ENCODE measurements at regions of chr2 and their contacts with region 1.

Region 1: GRCh38 chr2:100610381-100610831 is 47.6 kb downstream of the PDCL3 start:
- DNase-seq: peak; percentile 68 to 79 (median 72)
- H3K4me3 ChIP-seq: no peak overlapping the region
- H3K4me3 Mint-ChIP-seq: no peak overlapping the region
- H3K27ac ChIP-seq: no peak overlapping the region
- H3K27ac Mint-ChIP-seq: no peak overlapping the region
- H3K4me1 ChIP-seq: no peaks in the 10 kb centered on the region
- H3K4me1 Mint-ChIP-seq: peaks cover 2 to 6% (median 5%) of the 10 kb centered on the region in 4 donors
- H3K27me3 ChIP-seq: no peaks in the 10 kb centered on the region
- H3K27me3 Mint-ChIP-seq: no peaks in the 10 kb centered on the region

Region 2: GRCh38 chr2:100381240-100381639 is 229.2 kb before region 1 on chr2:
- CTCF ChIA-PET with region 1: no interaction called
- POLR2A ChIA-PET with region 1: no interaction called
- intact Hi-C with region 1: no loop called
- DNase-seq: peak in 4 of 5 donors; percentile 38 to 57 (median 54)
- H3K4me3 ChIP-seq: no peak overlapping the region
- H3K4me3 Mint-ChIP-seq: no peak overlapping the region
- H3K27ac ChIP-seq: no peak overlapping the region
- H3K27ac Mint-ChIP-seq: no peak overlapping the region
- H3K4me1 ChIP-seq: no peaks in the 10 kb centered on the region
- H3K4me1 Mint-ChIP-seq: peaks cover 0 to 1% (median 0%) of the 10 kb centered on the region in 4 donors
- H3K27me3 ChIP-seq: no peaks in the 10 kb centered on the region
- H3K27me3 Mint-ChIP-seq: peaks cover 2 to 11% of the 10 kb centered on the region in 2 donors

Region 3: DNA sequence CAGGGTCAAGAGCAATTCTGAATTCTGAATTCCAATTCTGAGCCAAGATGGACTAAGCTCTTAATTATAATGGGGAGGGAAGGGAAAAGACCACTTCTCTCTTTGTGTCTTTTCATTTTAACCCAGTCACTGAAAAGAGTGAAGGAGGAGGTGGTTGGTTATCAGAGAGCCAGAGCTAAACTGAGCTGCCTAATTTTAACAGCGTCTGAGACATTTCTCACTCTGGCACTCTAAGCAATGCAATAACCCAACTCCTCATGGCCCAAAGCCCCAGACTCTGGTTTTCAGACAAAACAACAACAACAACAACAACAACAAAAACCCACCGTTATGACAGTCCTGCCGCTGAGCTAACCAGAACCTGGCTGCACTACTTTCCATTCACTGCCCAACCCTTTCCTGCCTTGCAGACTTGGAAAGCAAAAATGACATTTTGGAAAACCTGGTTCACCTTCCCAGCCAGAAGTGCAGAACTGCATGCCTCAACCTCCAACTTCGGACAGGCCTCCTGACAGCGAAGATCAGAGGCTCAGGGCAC is 193.9 kb before region 1 on chr2:
- CTCF ChIA-PET with region 1: no interaction called
- POLR2A ChIA-PET with region 1: no interaction called
- intact Hi-C with region 1: no loop called
- DNase-seq: no peak
- H3K4me3 ChIP-seq: peak overlapping the region; percentile 32
- H3K4me3 Mint-ChIP-seq: peak overlapping the region; percentile 67 to 94 (median 84)
- H3K27ac ChIP-seq: no peak overlapping the region
- H3K27ac Mint-ChIP-seq: peak overlapping the region in 3 of 7 donors; percentile 25 to 30 (median 25)
- H3K4me1 ChIP-seq: peaks cover 8% of the 10 kb centered on the region
- H3K4me1 Mint-ChIP-seq: peaks cover 8 to 17% (median 14%) of the 10 kb centered on the region in 4 donors
- H3K27me3 ChIP-seq: no peaks in the 10 kb centered on the region
- H3K27me3 Mint-ChIP-seq: no peaks in the 10 kb centered on the region

Region 4: DNA sequence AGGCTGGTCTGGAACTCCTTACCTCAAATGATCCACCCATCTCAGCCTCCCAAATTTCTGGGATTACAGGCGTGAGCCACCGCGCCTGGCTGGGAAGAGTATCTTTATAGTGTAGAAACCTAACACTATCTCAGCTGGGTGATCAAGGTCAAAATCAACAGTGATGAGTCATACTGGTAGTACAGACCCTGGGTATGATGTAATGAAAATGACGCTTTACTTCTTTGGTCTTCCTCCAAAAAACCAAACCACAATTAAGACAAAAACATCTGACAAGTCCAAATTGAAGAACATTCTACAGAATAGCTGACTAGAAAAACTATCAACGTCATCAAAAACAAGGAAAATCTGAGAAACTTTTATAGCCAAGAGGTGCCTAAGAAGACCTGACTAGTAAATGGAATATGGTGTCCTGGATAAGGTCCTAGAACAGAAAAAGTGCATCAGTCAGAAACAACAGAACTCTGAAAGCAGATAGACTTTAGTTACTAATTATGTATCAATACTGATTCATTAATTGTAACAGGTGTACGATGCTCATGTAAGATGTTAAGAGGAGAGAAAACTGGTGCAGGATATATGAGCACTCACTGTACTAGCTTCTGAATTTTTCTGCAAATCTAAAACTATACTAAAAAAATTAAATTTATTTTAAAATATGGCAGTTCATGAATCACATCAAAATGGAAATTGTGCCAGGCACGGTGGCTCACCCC is 22.2 kb before region 1 on chr2:
- CTCF ChIA-PET with region 1: interaction called, 60 read pairs
- POLR2A ChIA-PET with region 1: no interaction called
- intact Hi-C with region 1: no loop called
- DNase-seq: peak; percentile 66 to 81 (median 73)
- H3K4me3 ChIP-seq: no peak overlapping the region
- H3K4me3 Mint-ChIP-seq: peak overlapping the region in 1 of 8 donors; percentile 6
- H3K27ac ChIP-seq: no peak overlapping the region
- H3K27ac Mint-ChIP-seq: peak overlapping the region; percentile 30 to 89 (median 70)
- H3K4me1 ChIP-seq: peaks cover 24% of the 10 kb centered on the region
- H3K4me1 Mint-ChIP-seq: peaks cover 16 to 47% (median 30%) of the 10 kb centered on the region in 4 donors
- H3K27me3 ChIP-seq: no peaks in the 10 kb centered on the region
- H3K27me3 Mint-ChIP-seq: no peaks in the 10 kb centered on the region

Region 5: DNA sequence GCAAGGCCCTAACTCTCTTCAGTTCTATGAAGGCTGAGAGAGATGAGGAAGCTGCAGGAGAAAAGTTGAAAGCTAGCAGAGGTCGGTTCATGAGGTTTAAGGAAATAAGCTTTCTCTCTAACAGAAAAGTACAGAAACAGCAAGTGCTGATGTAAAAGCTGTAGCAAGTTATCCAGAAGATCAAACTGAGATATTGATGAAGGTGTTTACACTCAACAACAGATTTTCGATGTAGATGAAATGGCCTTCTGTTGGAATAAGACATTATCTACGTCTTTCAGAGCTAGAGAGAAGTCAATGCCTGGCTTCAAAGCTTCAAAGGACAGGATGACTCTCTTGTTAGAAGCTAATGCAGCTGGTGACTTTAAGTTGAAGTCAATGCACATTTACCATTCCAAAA is 39.7 kb after region 1 on chr2:
- CTCF ChIA-PET with region 1: interaction called, 19 read pairs
- POLR2A ChIA-PET with region 1: interaction called, 4 read pairs
- intact Hi-C with region 1: no loop called
- DNase-seq: peak in 3 of 5 donors; percentile 11 to 24 (median 23)
- H3K4me3 ChIP-seq: no peak overlapping the region
- H3K4me3 Mint-ChIP-seq: peak overlapping the region in 7 of 8 donors; percentile 26 to 85 (median 53)
- H3K27ac ChIP-seq: no peak overlapping the region
- H3K27ac Mint-ChIP-seq: peak overlapping the region in 4 of 7 donors; percentile 29 to 90 (median 49)
- H3K4me1 ChIP-seq: peaks cover 33% of the 10 kb centered on the region
- H3K4me1 Mint-ChIP-seq: peaks cover 18 to 41% (median 30%) of the 10 kb centered on the region in 4 donors
- H3K27me3 ChIP-seq: no peaks in the 10 kb centered on the region
- H3K27me3 Mint-ChIP-seq: no peaks in the 10 kb centered on the region

Region 6: GRCh38 chr2:100819764-100820421 is 209.5 kb after region 1 on chr2 and contains the start of gene NPAS2:
- CTCF ChIA-PET with region 1: interaction called, 3 read pairs
- POLR2A ChIA-PET with region 1: no interaction called
- intact Hi-C with region 1: loop called (anchors 1 kb)
- DNase-seq: no peak
- H3K4me3 ChIP-seq: peak within 1 kb of the TSS in 1 of 2 donors; percentile 32
- H3K4me3 Mint-ChIP-seq: peak within 1 kb of the TSS; percentile 60 to 78 (median 72)
- H3K27ac ChIP-seq: no peak within 1 kb of the TSS
- H3K27ac Mint-ChIP-seq: no peak within 1 kb of the TSS
- H3K4me1 ChIP-seq: peaks cover 12% of the 10 kb centered on the region
- H3K4me1 Mint-ChIP-seq: peaks cover 4 to 19% (median 12%) of the 10 kb centered on the region in 4 donors
- H3K27me3 ChIP-seq: peaks cover 14% of the 10 kb centered on the region
- H3K27me3 Mint-ChIP-seq: peaks cover 31 to 32% of the 10 kb centered on the region in 2 donors
- total RNA-seq, gene NPAS2: 2.1 to 2.6 TPM

Region 7: DNA sequence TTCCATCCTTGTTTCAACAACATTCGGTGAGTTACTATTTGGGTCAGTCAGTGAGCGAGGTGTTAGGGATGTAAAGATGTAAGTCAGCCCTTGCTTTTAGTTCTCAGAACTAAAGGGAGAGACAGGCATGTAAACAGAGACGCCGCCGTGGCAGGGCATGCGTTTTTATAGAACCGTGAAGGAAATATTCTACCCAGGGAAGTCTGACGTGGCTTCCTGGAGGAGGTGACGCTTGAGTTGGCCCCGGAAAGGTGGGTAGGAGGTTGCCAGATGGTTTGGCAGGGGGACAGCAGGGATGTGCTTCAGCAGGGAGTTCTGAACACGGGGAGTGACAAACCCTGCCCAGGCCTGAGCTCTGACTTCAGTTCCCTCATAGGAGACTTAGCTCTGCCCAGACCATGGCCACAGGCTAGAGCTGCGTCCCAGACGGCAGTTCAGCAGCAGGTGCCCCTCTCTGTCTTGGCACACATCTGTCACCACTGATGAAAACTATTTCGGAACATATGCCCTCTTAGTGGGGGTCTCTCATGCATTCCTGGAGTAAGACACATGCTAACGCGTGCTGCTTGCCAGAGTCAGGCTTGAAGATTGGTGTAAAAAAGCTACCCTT is 368.3 kb after region 1 on chr2:
- CTCF ChIA-PET with region 1: interaction called, 78 read pairs
- POLR2A ChIA-PET with region 1: no interaction called
- intact Hi-C with region 1: no loop called
- DNase-seq: no peak
- H3K4me3 ChIP-seq: no peak overlapping the region
- H3K4me3 Mint-ChIP-seq: peak overlapping the region in 1 of 8 donors; percentile 19
- H3K27ac ChIP-seq: no peak overlapping the region
- H3K27ac Mint-ChIP-seq: peak overlapping the region in 2 of 7 donors; percentile 59 to 78
- H3K4me1 ChIP-seq: no peaks in the 10 kb centered on the region
- H3K4me1 Mint-ChIP-seq: peaks cover 0 to 3% (median under 1%) of the 10 kb centered on the region in 4 donors
- H3K27me3 ChIP-seq: no peaks in the 10 kb centered on the region
- H3K27me3 Mint-ChIP-seq: no peaks in the 10 kb centered on the region

Region 8: GRCh38 chr2:101012706-101013181 is 402.3 kb after region 1 on chr2:
- CTCF ChIA-PET with region 1: interaction called, 10 read pairs
- POLR2A ChIA-PET with region 1: no interaction called
- intact Hi-C with region 1: no loop called
- DNase-seq: peak in 4 of 5 donors; percentile 24 to 51 (median 37)
- H3K4me3 ChIP-seq: no peak overlapping the region
- H3K4me3 Mint-ChIP-seq: no peak overlapping the region
- H3K27ac ChIP-seq: no peak overlapping the region
- H3K27ac Mint-ChIP-seq: peak overlapping the region in 2 of 7 donors; percentile 30 to 55
- H3K4me1 ChIP-seq: no peaks in the 10 kb centered on the region
- H3K4me1 Mint-ChIP-seq: peaks cover 8 to 18% (median 12%) of the 10 kb centered on the region in 4 donors
- H3K27me3 ChIP-seq: no peaks in the 10 kb centered on the region
- H3K27me3 Mint-ChIP-seq: no peaks in the 10 kb centered on the region